Common myeloid progenitor, CD34-positive (primary cell): ENCODE measurements at regions of chr17 and their contacts with region 1.

Region 1: DNA sequence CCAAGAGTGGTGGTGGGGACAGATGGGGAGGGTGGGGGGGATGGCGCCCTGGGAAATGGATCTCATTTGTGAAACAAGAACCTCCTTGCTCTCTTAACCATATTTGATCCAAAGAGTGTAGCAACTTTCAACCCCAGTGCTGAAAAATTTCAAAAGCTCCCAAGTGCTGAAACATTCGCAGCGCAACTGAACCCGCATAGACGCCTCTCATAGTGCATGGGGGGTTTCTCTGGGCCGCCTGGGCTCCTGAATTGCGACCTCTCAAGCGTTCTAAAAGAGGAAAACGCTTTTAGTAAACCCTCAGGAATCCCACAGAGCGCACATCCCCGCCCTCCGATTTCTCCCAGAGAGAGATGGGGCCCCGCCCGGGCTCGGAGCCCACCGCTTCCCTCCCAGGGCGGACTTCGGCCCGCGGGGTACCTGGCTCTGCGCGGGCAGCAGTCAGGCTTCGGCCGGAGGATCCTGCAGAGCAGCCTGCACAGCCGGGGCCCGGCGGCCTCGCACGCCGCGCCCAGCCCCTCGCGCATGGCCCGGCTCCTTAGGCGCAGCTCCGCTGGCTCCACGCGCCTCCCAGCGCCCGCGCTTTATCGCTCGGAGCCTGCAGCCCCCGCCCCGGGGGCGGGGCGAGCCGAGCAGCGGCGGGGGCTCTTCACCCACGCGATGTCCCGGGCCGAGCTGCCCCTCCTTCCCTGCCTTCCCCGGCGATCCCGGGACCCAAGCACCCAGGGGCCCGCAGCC is 7.0 kb downstream of the NOS2 start:
- DNase-seq: peak in 2 of 3 donors; percentile 26 to 27
- H3K4me3 ChIP-seq: peak overlapping the region in 4 of 7 experiments; percentile 32 to 68 (median 49)
- H3K27ac ChIP-seq: no peak overlapping the region
- H3K4me1 ChIP-seq: peaks cover 0 to 11% (median 8%) of the 10 kb centered on the region in 4 experiments
- H3K27me3 ChIP-seq: peaks cover 3 to 49% (median 18%) of the 10 kb centered on the region in 5 experiments

Region 2: GRCh38 chr17:27778193-27778592 is 15.1 kb before region 1 on chr17:
- CTCF ChIA-PET with region 1: no interaction called
- POLR2A ChIA-PET with region 1: no interaction called
- DNase-seq: no peak
- H3K4me3 ChIP-seq: no peak overlapping the region
- H3K27ac ChIP-seq: no peak overlapping the region
- H3K4me1 ChIP-seq: peaks cover 0 to 14% (median under 1%) of the 10 kb centered on the region in 4 experiments
- H3K27me3 ChIP-seq: no peaks in the 10 kb centered on the region

Region 3: DNA sequence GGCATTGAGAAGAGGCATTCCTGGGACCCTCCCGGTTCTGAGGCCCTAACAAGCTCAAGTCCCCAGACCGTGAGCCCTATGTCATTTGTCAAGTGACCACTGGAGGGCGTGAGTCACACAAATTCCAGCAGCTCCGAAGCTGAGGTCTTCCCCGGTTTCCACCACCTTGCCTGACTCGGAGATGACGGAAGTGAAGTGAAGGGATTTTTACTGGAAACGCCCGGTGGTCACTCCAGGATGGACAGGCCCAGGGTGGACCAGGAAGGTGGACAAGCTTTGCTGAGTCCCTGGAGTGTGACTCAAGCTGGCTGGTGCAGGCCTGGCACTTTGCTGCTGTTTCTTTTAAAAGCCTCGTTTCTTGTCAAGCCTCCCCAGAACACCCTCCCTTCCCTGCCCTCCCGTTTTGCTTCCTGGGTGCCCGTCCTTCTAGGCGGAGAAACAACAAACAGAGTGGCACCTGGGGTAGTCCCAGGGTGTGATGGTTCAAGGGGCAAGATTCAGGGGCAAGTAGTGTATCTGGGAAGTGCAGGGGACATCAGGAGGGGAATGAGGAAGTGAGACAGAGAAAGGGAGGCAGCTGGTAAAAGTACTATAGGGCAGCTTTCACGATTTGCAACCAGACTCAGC is 12.3 kb after region 1 on chr17:
- CTCF ChIA-PET with region 1: interaction called, 39 read pairs
- POLR2A ChIA-PET with region 1: interaction called, 4 read pairs
- DNase-seq: peak; percentile 85 to 91 (median 88)
- H3K4me3 ChIP-seq: peak overlapping the region; percentile 24 to 82 (median 67)
- H3K27ac ChIP-seq: peak overlapping the region in 1 of 2 experiments; percentile 54
- H3K4me1 ChIP-seq: peaks cover 0 to 21% (median 14%) of the 10 kb centered on the region in 4 experiments
- H3K27me3 ChIP-seq: no peaks in the 10 kb centered on the region

Region 4: DNA sequence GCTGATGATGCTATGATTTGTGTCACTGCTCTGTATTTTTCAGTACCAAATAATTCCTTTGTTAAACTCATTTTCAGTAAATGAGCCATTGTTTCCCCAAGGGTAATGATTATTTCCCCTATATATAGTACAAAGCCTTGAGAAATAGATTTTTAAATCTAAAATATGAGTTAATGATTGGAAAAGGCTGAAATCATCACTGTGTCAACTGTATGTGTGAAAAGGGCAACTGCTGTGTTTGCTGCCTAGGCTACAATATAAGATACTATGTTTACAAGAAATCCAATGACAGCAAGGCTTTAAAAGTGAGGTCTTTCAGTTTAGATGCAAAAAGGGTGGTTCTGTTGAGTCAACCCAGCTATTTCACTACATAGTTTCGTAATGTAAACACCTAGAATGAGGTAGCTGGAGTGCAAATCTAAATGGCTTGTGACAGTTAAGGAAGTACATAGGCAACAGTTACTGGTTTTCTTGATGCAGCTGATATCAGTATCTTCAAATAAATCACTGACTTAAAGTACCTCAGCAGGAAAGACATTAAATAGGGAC is 264.5 kb after region 1 on chr17:
- CTCF ChIA-PET with region 1: no interaction called
- POLR2A ChIA-PET with region 1: no interaction called
- DNase-seq: peak in 2 of 3 donors; percentile 70 to 81
- H3K4me3 ChIP-seq: no peak overlapping the region
- H3K27ac ChIP-seq: peak overlapping the region in 1 of 2 experiments; percentile 25
- H3K4me1 ChIP-seq: peaks cover 5 to 17% (median 14%) of the 10 kb centered on the region in 4 experiments
- H3K27me3 ChIP-seq: no peaks in the 10 kb centered on the region